ENCODE measurements at regions of chr15 and their contacts with region 1.

Region 1: DNA sequence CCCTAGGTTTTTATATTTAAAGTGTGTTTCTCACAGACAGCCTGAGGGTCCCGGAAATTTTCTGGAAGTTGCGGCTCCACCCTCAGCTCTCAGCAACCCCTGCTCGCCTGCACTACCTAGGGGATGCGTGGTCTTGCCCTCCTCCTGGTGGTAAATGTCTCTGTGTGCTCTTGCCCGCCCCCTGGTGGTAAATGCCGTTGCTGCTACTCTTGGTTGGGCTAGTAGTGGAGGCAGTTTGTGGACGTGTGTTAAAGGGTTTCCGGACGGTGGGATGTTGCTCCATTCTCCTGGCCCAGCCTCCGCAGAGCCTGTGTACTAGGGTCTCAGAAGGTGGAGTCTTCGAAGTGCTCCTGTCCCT is 27.4 kb downstream of the STOML1 start:
- ATAC-seq: peak; percentile 57 to 98 (median 71)
- H3K4me3 ChIP-seq: no peak overlapping the region
- H3K27ac ChIP-seq: peak overlapping the region; percentile 1 to 13
- H3K4me1 ChIP-seq: peaks cover 13 to 16% of the 10 kb centered on the region in 2 donors

Region 2: GRCh38 chr15:73809733-73810501 is 154.8 kb before region 1 on chr15:
- in situ Hi-C with region 1: no loop called
- ATAC-seq: peak in 7 of 8 experiments; percentile 65 to 98 (median 97)
- H3K4me3 ChIP-seq: no peak overlapping the region
- H3K27ac ChIP-seq: peak overlapping the region in 1 of 2 donors; percentile 21
- H3K4me1 ChIP-seq: peaks cover 11 to 24% of the 10 kb centered on the region in 2 donors

Region 3: DNA sequence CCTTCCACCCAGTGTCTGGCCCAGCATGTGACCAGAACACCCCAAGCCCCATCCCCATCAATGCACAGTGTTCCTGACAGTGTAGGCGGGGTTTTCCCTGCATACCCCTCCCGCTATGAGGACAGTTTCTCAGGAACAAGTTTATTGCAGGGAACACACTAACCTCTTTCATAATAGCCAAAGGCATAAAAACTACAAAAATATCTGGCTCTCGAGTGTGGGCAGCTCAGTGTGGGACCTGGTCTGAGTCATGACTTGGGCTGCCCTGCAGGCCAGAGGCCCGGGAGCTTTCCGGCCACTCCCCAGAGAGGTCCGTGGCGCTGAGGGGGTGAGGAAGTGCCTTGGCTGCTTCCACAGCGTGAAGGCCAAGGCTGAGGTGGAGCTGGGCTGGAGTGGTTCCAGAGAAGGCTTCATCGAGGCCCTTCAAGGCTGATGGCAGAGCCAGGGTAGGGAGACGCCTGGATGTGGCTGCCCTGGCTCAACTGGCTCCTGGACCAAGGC is 214.7 kb after region 1 on chr15:
- in situ Hi-C with region 1: no loop called
- ATAC-seq: peak in 6 of 8 experiments; percentile 7 to 90 (median 45)
- H3K4me3 ChIP-seq: no peak overlapping the region
- H3K27ac ChIP-seq: no peak overlapping the region
- H3K4me1 ChIP-seq: peaks cover 29% of the 10 kb centered on the region in 2 donors

Region 4: DNA sequence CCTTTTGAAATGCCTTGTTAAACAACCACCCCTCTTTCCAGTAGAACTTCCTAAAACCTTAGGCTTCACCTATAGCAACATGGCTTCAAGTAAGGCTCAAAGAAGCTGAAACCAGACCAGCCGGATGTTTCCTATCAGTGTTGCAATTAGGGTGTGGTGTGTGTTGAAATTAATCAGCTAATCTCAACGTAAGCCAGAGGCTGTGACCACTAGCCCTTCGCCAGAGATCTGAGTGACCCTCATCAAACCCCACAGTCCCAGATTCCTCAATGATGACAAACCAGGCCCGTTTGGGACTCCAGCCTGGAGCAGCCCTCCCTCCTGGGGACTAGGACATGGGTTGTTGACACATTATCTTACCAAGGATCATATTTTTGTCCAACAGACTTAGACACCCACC is 375.4 kb after region 1 on chr15:
- in situ Hi-C with region 1: loop called in 1 of 9 experiments (anchors 25 kb)
- ATAC-seq: peak in 2 of 8 experiments; percentile 67 to 68
- H3K4me3 ChIP-seq: no peak overlapping the region
- H3K27ac ChIP-seq: no peak overlapping the region
- H3K4me1 ChIP-seq: no peaks in the 10 kb centered on the region

Region 5: DNA sequence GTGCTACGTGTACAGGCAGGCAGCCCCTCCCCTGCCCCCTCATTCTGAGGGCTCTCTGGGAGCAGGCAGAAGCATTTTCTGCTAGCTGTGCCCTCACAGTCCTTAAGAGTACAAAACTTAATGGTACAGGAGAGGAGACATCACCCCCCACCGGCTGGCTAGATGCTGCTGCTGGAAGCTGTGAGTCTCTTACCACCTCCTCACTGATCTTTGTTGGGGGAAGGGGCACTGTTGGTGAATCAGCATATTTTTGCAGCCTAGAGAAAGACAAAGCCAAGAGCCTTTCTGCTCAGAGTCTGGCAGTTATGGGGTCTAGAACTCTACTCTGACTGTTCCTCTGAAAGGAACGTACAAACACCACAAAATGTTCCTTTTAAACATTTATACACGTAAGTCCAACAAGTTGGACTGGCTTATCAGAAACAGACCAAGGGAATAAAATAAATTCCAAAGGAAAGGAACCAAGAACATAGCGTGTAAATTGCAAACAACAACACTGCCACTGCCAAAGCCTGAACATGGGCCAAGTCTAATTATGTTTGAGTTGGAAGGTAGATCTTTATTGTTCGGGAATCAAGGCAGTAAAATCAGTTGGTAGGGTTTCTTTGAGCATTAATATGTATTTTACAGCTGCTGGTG is 678.1 kb after region 1 on chr15:
- in situ Hi-C with region 1: no loop called
- ATAC-seq: peak in 5 of 8 experiments; percentile 25 to 54 (median 44)
- H3K4me3 ChIP-seq: no peak overlapping the region
- H3K27ac ChIP-seq: no peak overlapping the region
- H3K4me1 ChIP-seq: peaks cover 0 to 10% of the 10 kb centered on the region in 2 donors

Region 6: GRCh38 chr15:75200765-75201608 is 1236.3 kb after region 1 on chr15:
- in situ Hi-C with region 1: no loop called
- ATAC-seq: peak in 7 of 8 experiments; percentile 1 to 24 (median 5)
- H3K4me3 ChIP-seq: peak overlapping the region; percentile 45 to 86 (median 72)
- H3K27ac ChIP-seq: no peak overlapping the region
- H3K4me1 ChIP-seq: peaks cover 6 to 20% of the 10 kb centered on the region in 2 donors

Measured in motor neuron (in vitro differentiated cells).